ENCODE measurements at regions of chr2 and their contacts with region 1.

Region 1: DNA sequence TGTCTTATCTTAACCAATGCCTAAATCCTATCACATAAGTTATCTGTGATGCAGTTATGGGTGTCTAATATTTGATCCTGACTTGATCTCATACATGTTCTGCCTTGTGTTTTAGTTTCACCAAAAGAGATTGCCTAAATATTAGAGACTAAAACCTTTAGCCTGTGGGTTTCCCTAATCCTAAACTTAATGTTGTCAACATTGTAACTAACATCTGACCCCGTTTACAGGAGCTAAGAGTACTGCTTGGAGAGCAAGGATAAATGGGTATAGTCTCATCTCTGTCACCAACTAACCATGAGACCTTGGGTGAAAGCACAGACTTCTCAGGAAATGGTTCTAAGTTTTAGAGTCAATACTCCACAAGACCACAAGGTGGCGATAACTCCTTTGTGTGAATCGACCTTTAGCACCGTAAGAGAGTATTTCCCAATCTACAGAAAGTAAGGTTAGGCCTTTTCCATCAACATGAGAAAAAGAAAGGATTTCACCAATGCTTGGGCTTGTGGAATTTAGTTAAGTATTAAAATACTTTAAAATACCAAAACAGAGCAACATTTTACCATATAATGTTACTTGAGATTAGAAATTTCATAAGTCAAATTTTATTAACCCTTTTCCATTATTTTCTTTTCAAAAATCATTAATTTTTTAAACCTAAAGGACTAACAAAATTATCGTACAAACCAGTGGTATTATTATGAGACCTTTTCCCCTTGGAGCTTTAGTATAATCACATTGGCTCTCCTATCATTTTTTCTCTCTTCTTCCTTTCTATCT is 60.5 kb downstream of the G6PC2 start:
- DNase-seq: peak; percentile 66

Region 2: GRCh38 chr2:169050478-169051240 is 89.0 kb after region 1 on chr2:
- in situ Hi-C with region 1: no loop called
- DNase-seq: peak; percentile 35

Region 3: GRCh38 chr2:169095621-169096105 is 134.0 kb after region 1 on chr2:
- in situ Hi-C with region 1: loop called (anchors 25 kb)
- DNase-seq: peak; percentile 70